GM12878 (cell line): ENCODE measurements at regions of chr6 and their contacts with region 1.

Region 1: DNA sequence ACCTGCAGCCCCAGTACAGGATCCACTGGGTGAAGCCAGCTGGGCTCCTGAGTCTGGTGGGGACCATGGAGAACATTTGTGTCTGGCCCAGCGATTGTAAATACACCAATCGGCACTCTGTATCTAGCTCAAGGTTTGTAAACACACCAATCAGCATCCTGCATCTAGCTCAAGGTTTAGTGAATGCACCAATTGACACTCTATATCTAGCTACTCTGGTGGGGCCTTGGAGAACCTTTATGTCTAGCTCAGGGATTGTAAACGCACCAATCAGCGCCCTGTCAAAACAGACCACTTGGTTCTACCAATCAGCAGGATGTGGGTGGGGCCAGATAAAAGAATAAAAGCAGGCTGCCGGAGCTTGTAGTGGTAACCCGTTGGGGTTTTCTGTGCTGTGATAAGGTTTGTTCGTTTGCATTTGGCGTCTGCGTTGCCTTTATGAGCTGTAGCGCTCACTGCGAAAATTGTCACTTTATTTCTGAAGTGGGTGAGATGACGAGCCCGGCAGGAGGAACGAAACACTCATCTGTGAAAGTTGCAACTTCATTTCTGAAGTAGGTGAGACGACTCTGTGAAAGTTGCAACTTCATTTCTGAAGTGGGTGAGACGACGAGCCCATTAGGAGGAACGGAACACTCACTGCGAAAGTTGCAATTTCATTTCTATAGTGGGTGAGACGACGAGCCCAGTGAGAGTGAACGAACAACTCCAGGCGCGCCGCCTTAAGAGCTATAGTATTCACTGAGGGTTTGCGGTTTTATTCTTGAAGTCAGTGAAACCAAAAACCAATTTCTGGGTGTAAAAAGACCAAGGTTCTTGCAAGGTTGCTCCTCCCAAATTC is 31.1 kb downstream of the SERPINB6 start:
- DNase-seq: peak; percentile 99
- ATAC-seq: peak; percentile 97
- H3K4me3 ChIP-seq: no peak overlapping the region
- H3K27ac ChIP-seq: peak overlapping the region; percentile 17; the same call in 1 of the 2 replicates
- H3K4me1 ChIP-seq: peaks cover 36% of the 10 kb centered on the region
- H3K27me3 ChIP-seq: peaks cover 0 to 6% of the 10 kb centered on the region in 2 experiments
- CTCF ChIP-seq: no peak
- EP300 ChIP-seq: peak; percentile 64 to 93
- POLR2A ChIP-seq: peak; percentile 72
- RAD21 ChIP-seq: no peak

Region 2: DNA sequence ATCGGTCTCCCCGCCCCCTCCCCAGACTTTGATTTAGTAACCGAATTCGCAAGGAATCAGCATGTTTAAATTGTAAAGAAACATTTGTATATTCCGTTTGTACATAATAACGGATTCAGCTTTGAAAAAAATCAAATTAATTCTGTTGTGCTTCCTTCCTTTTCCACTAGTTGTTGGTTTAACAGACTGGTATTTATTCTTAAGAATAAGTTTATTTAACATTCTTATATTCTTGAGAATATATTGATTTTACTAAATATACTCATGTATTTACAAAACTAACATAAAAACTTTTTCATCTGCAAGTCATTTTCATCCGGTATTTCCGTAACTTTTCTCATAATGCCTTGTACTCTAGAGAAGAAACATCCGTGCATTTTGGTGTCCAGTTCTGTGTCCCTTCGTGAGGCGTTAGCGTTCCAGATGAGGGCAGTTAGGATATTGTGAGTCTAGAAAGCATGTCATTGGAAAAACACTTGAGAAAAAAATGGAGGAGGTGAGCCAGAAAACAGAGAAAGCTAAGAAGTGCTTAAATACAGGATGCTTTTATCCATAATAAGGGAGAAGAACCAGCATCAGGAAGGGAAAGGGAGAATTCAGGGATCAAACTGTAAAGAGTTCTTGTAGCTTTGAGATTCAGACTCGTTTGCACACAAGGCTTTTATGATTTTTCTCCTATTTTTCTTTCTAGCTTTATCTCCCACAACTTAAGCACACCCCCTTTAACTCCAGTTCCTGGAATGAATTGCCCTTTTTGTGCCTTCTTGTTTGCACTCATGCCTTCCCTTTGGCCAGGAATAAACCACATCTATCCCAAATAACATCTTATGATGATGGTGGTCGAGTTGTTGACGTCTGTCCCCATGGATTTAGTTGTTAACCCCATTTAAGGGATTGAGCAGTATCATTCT is 173.2 kb before region 1 on chr6:
- CTCF ChIA-PET with region 1: no interaction called
- POLR2A ChIA-PET with region 1: no interaction called
- RAD21 ChIA-PET with region 1: no interaction called
- SMC1A ChIA-PET with region 1: no interaction called
- in situ Hi-C with region 1: no loop called
- intact Hi-C with region 1: no loop called
- DNase-seq: no peak
- ATAC-seq: no peak
- H3K4me3 ChIP-seq: peak overlapping the region; percentile 92
- H3K27ac ChIP-seq: peak overlapping the region; percentile 72; the same call in 1 of the 2 replicates
- H3K4me1 ChIP-seq: peaks cover 11% of the 10 kb centered on the region
- H3K27me3 ChIP-seq: no peaks in the 10 kb centered on the region
- CTCF ChIP-seq: no peak
- EP300 ChIP-seq: no peak
- POLR2A ChIP-seq: no peak
- RAD21 ChIP-seq: no peak

Region 3: GRCh38 chr6:2900821-2901644 is 39.2 kb before region 1 on chr6:
- CTCF ChIA-PET with region 1: interaction called, 5 read pairs
- POLR2A ChIA-PET with region 1: interaction called, 3 read pairs
- RAD21 ChIA-PET with region 1: interaction called, 9 read pairs
- SMC1A ChIA-PET with region 1: interaction called, 3 read pairs
- in situ Hi-C with region 1: no loop called
- intact Hi-C with region 1: loop called (anchors 2 kb)
- DNase-seq: no peak
- ATAC-seq: peak; percentile 8
- H3K4me3 ChIP-seq: peak overlapping the region; percentile 57
- H3K27ac ChIP-seq: no peak overlapping the region
- H3K4me1 ChIP-seq: peaks cover 29% of the 10 kb centered on the region
- H3K27me3 ChIP-seq: no peaks in the 10 kb centered on the region; a peak in 1 of 4 replicates
- CTCF ChIP-seq: no peak
- EP300 ChIP-seq: no peak
- POLR2A ChIP-seq: 0 out of 2 replicates have a peak, but pooled peaks have one; percentile 1
- RAD21 ChIP-seq: no peak

Region 4: DNA sequence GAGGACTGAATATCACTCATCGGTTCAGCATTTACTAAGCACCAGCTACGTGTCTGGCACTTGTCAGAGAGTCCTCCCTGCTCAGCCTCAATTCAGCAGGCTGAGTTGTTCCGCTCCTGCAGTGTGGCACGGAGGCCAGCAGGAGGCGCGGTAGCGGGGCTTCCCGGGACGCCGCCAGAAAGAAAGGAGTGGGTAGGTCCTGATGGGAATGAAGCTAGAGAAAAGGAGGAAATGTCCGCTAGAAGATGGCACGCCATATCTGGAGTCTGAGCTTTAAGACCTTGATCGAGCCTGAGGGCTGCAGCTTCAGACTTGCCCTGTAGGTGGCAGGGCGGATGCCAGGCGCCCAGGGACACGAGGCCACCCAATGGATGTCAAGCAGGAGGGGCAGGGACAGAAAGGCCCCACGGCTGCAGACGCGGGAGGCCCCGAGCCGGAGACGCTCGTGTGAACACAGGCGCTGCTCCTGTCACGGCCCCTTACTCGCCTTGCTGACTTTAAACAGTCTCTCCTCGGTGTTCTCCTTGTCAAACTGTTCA is 12.4 kb after region 1 on chr6:
- CTCF ChIA-PET with region 1: interaction called, 13 read pairs
- POLR2A ChIA-PET with region 1: interaction called, 3 read pairs
- RAD21 ChIA-PET with region 1: interaction called, 5 read pairs
- SMC1A ChIA-PET with region 1: interaction called, 4 read pairs
- in situ Hi-C with region 1: no loop called
- intact Hi-C with region 1: no loop called
- DNase-seq: no peak
- ATAC-seq: peak; percentile 99
- H3K4me3 ChIP-seq: no peak overlapping the region
- H3K27ac ChIP-seq: no peak overlapping the region
- H3K4me1 ChIP-seq: no peaks in the 10 kb centered on the region
- H3K27me3 ChIP-seq: peaks cover 4 to 6% of the 10 kb centered on the region in 2 experiments
- CTCF ChIP-seq: peak; percentile 52 to 83 (median 80)
- EP300 ChIP-seq: no peak
- POLR2A ChIP-seq: no peak
- RAD21 ChIP-seq: no peak

Region 5: GRCh38 chr6:2988426-2989331 is 48.4 kb after region 1 on chr6:
- CTCF ChIA-PET with region 1: interaction called, 62 read pairs
- POLR2A ChIA-PET with region 1: interaction called, 5 read pairs
- RAD21 ChIA-PET with region 1: interaction called, 4 read pairs
- SMC1A ChIA-PET with region 1: interaction called, 7 read pairs
- in situ Hi-C with region 1: no loop called
- intact Hi-C with region 1: loop called (anchors 2 kb)
- DNase-seq: no peak
- ATAC-seq: peak; percentile 92
- H3K4me3 ChIP-seq: peak overlapping the region; percentile 71
- H3K27ac ChIP-seq: peak overlapping the region; percentile 79
- H3K4me1 ChIP-seq: peaks cover 13% of the 10 kb centered on the region
- H3K27me3 ChIP-seq: peaks cover 0 to 2% of the 10 kb centered on the region in 2 experiments; a peak in 3 of 4 replicates
- CTCF ChIP-seq: peak; percentile 56 to 75 (median 73)
- EP300 ChIP-seq: no peak; a peak in 1 of 4 replicates
- POLR2A ChIP-seq: peak; percentile 64
- RAD21 ChIP-seq: peak; percentile 73

Region 6: GRCh38 chr6:3068329-3069214 is 128.3 kb after region 1 on chr6 and contains the start of gene RIPK1:
- CTCF ChIA-PET with region 1: interaction called, 3 read pairs
- POLR2A ChIA-PET with region 1: no interaction called
- RAD21 ChIA-PET with region 1: no interaction called
- SMC1A ChIA-PET with region 1: no interaction called
- in situ Hi-C with region 1: no loop called
- intact Hi-C with region 1: loop called (anchors 5 kb)
- DNase-seq: peak; percentile 40
- ATAC-seq: peak; percentile 90
- H3K4me3 ChIP-seq: peak within 1 kb of the TSS; percentile 73
- H3K27ac ChIP-seq: peak within 1 kb of the TSS; percentile 91
- H3K4me1 ChIP-seq: no peaks in the 10 kb centered on the region; the same call in 1 of the 2 replicates
- H3K27me3 ChIP-seq: no peaks in the 10 kb centered on the region
- CTCF ChIP-seq: peak; percentile 23 to 62 (median 35); a peak in 5 of 6 replicates
- EP300 ChIP-seq: no peak
- POLR2A ChIP-seq: peak; percentile 84
- RAD21 ChIP-seq: 0 out of 2 replicates have a peak, but pooled peaks have one; percentile 15
- polyA plus RNA-seq, gene RIPK1: 1.6 to 2.2 TPM

Region 7: DNA sequence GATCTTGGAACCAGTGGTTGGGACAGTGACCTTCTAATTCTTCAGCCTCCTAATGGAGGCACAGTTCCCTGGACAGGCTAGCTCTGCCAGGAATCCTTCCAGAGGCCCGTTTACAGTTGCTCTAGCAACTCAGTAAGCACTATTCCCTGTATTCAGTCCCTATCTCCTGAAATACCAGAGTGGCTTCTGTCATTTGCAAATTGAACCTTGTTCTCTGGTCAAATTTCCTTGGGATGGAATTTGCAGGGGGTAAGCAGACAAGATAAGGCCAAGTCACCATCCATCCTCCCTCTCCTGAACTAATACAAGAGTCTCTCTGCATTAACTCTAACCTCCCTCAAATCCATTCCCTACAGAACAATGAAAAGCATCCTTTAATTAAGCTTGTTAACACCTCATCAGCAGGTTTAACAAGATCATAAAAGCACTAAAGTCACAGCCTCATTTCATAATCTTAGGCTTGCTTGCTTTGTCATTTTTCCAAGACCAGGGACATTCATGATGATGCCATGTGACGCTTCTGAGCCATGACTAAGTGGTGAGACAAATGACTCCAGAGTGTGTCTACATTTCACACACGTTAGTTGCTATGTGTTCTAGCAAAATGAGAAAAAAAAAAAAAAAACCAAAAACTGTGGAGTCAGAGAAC is 479.5 kb after region 1 on chr6:
- CTCF ChIA-PET with region 1: no interaction called
- POLR2A ChIA-PET with region 1: no interaction called
- RAD21 ChIA-PET with region 1: no interaction called
- SMC1A ChIA-PET with region 1: no interaction called
- in situ Hi-C with region 1: no loop called
- intact Hi-C with region 1: no loop called
- DNase-seq: no peak
- ATAC-seq: no peak
- H3K4me3 ChIP-seq: no peak overlapping the region
- H3K27ac ChIP-seq: no peak overlapping the region
- H3K4me1 ChIP-seq: peaks cover 4% of the 10 kb centered on the region
- H3K27me3 ChIP-seq: no peaks in the 10 kb centered on the region
- CTCF ChIP-seq: no peak
- EP300 ChIP-seq: no peak
- POLR2A ChIP-seq: no peak
- RAD21 ChIP-seq: no peak